CD4-positive, alpha-beta T cell (primary cell): ENCODE measurements at regions of chr13 and their contacts with region 1.

Region 1: DNA sequence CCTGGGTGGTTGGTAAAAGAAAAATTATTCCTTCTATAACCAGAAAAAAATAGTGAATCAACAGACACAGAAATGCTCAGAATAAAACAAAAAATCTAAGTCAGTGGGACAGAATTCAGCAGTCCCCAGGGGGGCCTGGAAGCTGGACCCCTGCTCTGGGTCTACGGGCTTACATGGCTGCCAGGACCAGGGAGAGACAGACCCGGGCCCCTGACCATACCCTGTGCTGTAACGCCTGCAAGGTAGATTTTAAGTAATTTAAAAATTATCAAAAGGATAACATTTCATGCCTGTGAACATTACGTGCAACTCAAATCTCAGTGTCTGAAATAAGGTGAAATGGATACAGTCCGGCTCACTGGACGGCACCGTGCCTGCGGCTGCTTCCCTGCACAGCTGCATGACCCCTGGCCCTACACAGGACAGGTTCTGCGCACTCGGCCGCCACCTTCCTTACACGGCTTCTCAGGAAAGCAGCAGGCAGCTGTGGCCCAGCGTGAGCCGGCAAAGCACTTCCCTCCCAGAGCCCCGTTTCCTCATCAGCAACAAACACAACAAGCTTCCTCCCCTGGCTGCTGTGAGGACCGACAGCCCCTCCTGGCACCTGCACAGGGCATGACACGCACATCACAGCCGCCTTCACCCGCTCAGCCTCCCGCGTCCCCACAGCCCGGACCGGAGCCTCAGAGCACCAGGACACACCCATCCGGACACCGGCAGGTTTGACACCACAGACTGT is 22.2 kb downstream of the RASA3 start:
- DNase-seq: peak; percentile 69 to 92 (median 80)
- ATAC-seq: peak; percentile 87
- H3K4me3 ChIP-seq: peak overlapping the region; percentile 45
- H3K4me3 Mint-ChIP-seq: peak overlapping the region; percentile 81
- H3K27ac ChIP-seq: peak overlapping the region; percentile 55 to 63
- H3K27ac Mint-ChIP-seq: peak overlapping the region; percentile 98
- H3K4me1 ChIP-seq: peaks cover 94% of the 10 kb centered on the region
- H3K4me1 Mint-ChIP-seq: peaks cover 85% of the 10 kb centered on the region
- H3K27me3 ChIP-seq: no peaks in the 10 kb centered on the region
- H3K27me3 Mint-ChIP-seq: no peaks in the 10 kb centered on the region
- CTCF ChIP-seq: peak; percentile 67

Region 2: GRCh38 chr13:114047358-114047881 is 62.8 kb before region 1 on chr13:
- CTCF ChIA-PET with region 1: interaction called, 4 read pairs
- POLR2A ChIA-PET with region 1: no interaction called
- intact Hi-C with region 1: loop called in 1 of 2 experiments (anchors 5 kb)
- DNase-seq: no peak
- ATAC-seq: no peak
- H3K4me3 ChIP-seq: no peak overlapping the region
- H3K4me3 Mint-ChIP-seq: peak overlapping the region; percentile 14
- H3K27ac ChIP-seq: no peak overlapping the region
- H3K27ac Mint-ChIP-seq: peak overlapping the region; percentile 82
- H3K4me1 ChIP-seq: peaks cover 72% of the 10 kb centered on the region
- H3K4me1 Mint-ChIP-seq: peaks cover 71% of the 10 kb centered on the region
- H3K27me3 ChIP-seq: no peaks in the 10 kb centered on the region
- H3K27me3 Mint-ChIP-seq: no peaks in the 10 kb centered on the region
- CTCF ChIP-seq: no peak

Region 3: GRCh38 chr13:114065141-114065925 is 44.9 kb before region 1 on chr13:
- CTCF ChIA-PET with region 1: interaction called, 8 read pairs
- POLR2A ChIA-PET with region 1: interaction called, 33 read pairs
- intact Hi-C with region 1: loop called (anchors 1 to 5 kb)
- DNase-seq: peak; percentile 44 to 87 (median 68)
- ATAC-seq: peak; percentile 67
- H3K4me3 ChIP-seq: peak overlapping the region; percentile 51
- H3K4me3 Mint-ChIP-seq: peak overlapping the region; percentile 87
- H3K27ac ChIP-seq: peak overlapping the region; percentile 70 to 77
- H3K27ac Mint-ChIP-seq: peak overlapping the region; percentile 95
- H3K4me1 ChIP-seq: peaks cover 71% of the 10 kb centered on the region
- H3K4me1 Mint-ChIP-seq: peaks cover 63% of the 10 kb centered on the region
- H3K27me3 ChIP-seq: no peaks in the 10 kb centered on the region
- H3K27me3 Mint-ChIP-seq: no peaks in the 10 kb centered on the region
- CTCF ChIP-seq: no peak

Region 4: GRCh38 chr13:114124921-114125320 is 14.7 kb after region 1 on chr13:
- CTCF ChIA-PET with region 1: interaction called, 15 read pairs
- POLR2A ChIA-PET with region 1: interaction called, 65 read pairs
- intact Hi-C with region 1: loop called in 1 of 2 experiments (anchors 2 kb)
- DNase-seq: peak in 13 of 14 experiments; percentile 40 to 88 (median 58)
- ATAC-seq: peak; percentile 69
- H3K4me3 ChIP-seq: no peak overlapping the region
- H3K4me3 Mint-ChIP-seq: peak overlapping the region; percentile 83
- H3K27ac ChIP-seq: peak overlapping the region in 1 of 2 donors; percentile 40
- H3K27ac Mint-ChIP-seq: peak overlapping the region; percentile 83
- H3K4me1 ChIP-seq: peaks cover 96% of the 10 kb centered on the region
- H3K4me1 Mint-ChIP-seq: peaks cover 80% of the 10 kb centered on the region
- H3K27me3 ChIP-seq: no peaks in the 10 kb centered on the region
- H3K27me3 Mint-ChIP-seq: no peaks in the 10 kb centered on the region
- CTCF ChIP-seq: no peak